PC-3 (cell line): ENCODE measurements at regions of chr6 and their contacts with region 1.

Region 1: GRCh38 chr6:150905769-150906506 is 40.4 kb downstream of the MTHFD1L start:
- DNase-seq: no peak
- ATAC-seq: no peak
- H3K4me3 ChIP-seq: no peak overlapping the region
- H3K27ac ChIP-seq: no peak overlapping the region
- H3K4me1 ChIP-seq: no peaks in the 10 kb centered on the region
- H3K27me3 ChIP-seq: no peaks in the 10 kb centered on the region
- CTCF ChIP-seq: peak; percentile 59

Region 2: GRCh38 chr6:151422981-151423380 is 517.0 kb after region 1 on chr6:
- CTCF ChIA-PET with region 1: no interaction called
- POLR2A ChIA-PET with region 1: interaction called, 14 read pairs
- intact Hi-C with region 1: no loop called
- DNase-seq: no peak
- ATAC-seq: no peak
- H3K4me3 ChIP-seq: no peak overlapping the region
- H3K27ac ChIP-seq: no peak overlapping the region
- H3K4me1 ChIP-seq: no peaks in the 10 kb centered on the region
- H3K27me3 ChIP-seq: no peaks in the 10 kb centered on the region
- CTCF ChIP-seq: no peak